ENCODE measurements at regions of chr22 and their contacts with region 1.

Region 1: GRCh38 chr22:45468872-45469271 is 33.8 kb upstream of the FBLN1 start:
- DNase-seq: peak; percentile 63
- ATAC-seq: peak; percentile 81
- H3K4me3 ChIP-seq: no peak overlapping the region
- H3K27ac ChIP-seq: no peak overlapping the region
- H3K4me1 ChIP-seq: peaks cover 14% of the 10 kb centered on the region
- H3K27me3 ChIP-seq: no peaks in the 10 kb centered on the region
- CTCF ChIP-seq: no peak
- POLR2A ChIP-seq: no peak
- RAD21 ChIP-seq: no peak

Region 2: GRCh38 chr22:45413368-45414211 is 55.3 kb before region 1 on chr22 and contains the starts of genes RIBC2 and SMC1B:
- CTCF ChIA-PET with region 1: no interaction called
- POLR2A ChIA-PET with region 1: interaction called, 19 read pairs
- dilution Hi-C with region 1: no loop called
- in situ Hi-C with region 1: no loop called
- intact Hi-C with region 1: no loop called
- DNase-seq: peak; percentile 57
- ATAC-seq: peak; percentile 74
- H3K4me3 ChIP-seq: peak within 1 kb of the TSS; percentile 66
- H3K27ac ChIP-seq: no peak within 1 kb of the TSS; the same call in 1 of the 2 replicates
- H3K4me1 ChIP-seq: peaks cover 2% of the 10 kb centered on the region
- H3K27me3 ChIP-seq: peaks cover 2% of the 10 kb centered on the region
- CTCF ChIP-seq: no peak
- POLR2A ChIP-seq: no peak
- RAD21 ChIP-seq: no peak
- total RNA-seq, gene RIBC2: 0.28 and 0.36 TPM in 2 replicates
- total RNA-seq, gene SMC1B: not detected in 2 replicates